ENCODE measurements at regions of chr10 and their contacts with region 1.

Region 1: GRCh38 chr10:100338434-100339036 is 8.5 kb upstream of the SCD start:
- DNase-seq: peak; percentile 85
- H3K4me3 ChIP-seq: no peak overlapping the region
- H3K27ac ChIP-seq: no peak overlapping the region
- H3K4me1 ChIP-seq: no peaks in the 10 kb centered on the region
- H3K27me3 ChIP-seq: peaks cover 0 to 6% (median 0%) of the 10 kb centered on the region in 3 donors
- CTCF ChIP-seq: peak; percentile 75 to 92 (median 88)
- EP300 ChIP-seq: no peak
- POLR2A ChIP-seq: no peak

Region 2: GRCh38 chr10:99870123-99870730 is 468.3 kb before region 1 on chr10:
- intact Hi-C with region 1: no loop called
- DNase-seq: no peak
- H3K4me3 ChIP-seq: no peak overlapping the region
- H3K27ac ChIP-seq: no peak overlapping the region
- H3K4me1 ChIP-seq: no peaks in the 10 kb centered on the region
- H3K27me3 ChIP-seq: peaks cover 0 to 10% (median 0%) of the 10 kb centered on the region in 3 donors
- CTCF ChIP-seq: no peak
- EP300 ChIP-seq: no peak
- POLR2A ChIP-seq: no peak

Region 3: DNA sequence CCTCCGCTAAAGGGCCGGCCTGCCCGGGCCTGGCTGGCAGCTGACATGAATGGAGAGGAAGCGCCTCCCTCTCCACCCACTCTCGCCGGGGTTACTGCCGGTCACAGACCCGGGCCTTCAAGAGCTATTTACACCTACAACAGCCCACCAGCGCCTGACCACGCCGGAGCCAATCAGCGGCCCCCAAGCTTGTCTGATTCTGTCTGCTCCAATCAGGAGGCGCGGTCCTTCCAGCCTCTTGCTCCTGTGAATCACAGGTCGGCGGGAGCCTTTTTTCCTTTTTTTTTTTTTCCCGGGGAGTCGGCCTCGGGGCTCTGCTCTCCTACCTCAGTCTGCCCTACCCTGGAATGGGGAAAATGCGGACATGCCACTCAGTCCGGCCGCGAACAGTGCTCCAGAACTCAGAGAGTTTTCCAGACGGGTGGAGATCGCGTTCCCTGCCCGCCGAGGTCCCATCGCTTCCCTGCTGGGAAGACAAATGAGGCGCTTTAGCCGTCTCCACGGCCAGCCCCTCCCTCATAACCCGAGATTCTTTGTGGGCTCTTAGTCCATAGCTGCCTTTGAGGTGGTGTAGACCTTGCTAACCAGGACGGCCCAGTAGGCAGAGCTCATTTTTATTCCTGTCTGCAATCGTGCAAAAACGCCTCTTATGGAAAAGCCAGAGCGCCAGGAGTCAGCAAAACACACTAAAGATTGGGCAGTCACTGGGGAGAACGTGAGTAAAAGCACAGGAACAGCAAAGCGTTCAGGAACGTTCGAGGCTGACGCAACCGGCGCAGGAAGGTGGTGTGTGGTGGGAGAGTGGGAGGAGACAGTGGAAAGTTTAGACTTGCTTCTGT is 35.0 kb after region 1 on chr10:
- intact Hi-C with region 1: loop called (anchors 5 kb)
- DNase-seq: peak; percentile 99
- H3K4me3 ChIP-seq: peak overlapping the region; percentile 41 to 80 (median 60)
- H3K27ac ChIP-seq: peak overlapping the region; percentile 90 to 99 (median 96)
- H3K4me1 ChIP-seq: peaks cover 0 to 31% (median 28%) of the 10 kb centered on the region in 4 donors
- H3K27me3 ChIP-seq: no peaks in the 10 kb centered on the region
- CTCF ChIP-seq: no peak
- EP300 ChIP-seq: peak in 1 of 4 donors; percentile 19
- POLR2A ChIP-seq: peak in 1 of 2 donors; percentile 36

Region 4: GRCh38 chr10:100433253-100434240 is 95.0 kb after region 1 on chr10:
- intact Hi-C with region 1: loop called (anchors 1 kb)
- DNase-seq: peak; percentile 93
- H3K4me3 ChIP-seq: no peak overlapping the region
- H3K27ac ChIP-seq: no peak overlapping the region
- H3K4me1 ChIP-seq: no peaks in the 10 kb centered on the region
- H3K27me3 ChIP-seq: no peaks in the 10 kb centered on the region
- CTCF ChIP-seq: peak; percentile 97 to 100 (median 100)
- EP300 ChIP-seq: no peak
- POLR2A ChIP-seq: no peak

Region 5: DNA sequence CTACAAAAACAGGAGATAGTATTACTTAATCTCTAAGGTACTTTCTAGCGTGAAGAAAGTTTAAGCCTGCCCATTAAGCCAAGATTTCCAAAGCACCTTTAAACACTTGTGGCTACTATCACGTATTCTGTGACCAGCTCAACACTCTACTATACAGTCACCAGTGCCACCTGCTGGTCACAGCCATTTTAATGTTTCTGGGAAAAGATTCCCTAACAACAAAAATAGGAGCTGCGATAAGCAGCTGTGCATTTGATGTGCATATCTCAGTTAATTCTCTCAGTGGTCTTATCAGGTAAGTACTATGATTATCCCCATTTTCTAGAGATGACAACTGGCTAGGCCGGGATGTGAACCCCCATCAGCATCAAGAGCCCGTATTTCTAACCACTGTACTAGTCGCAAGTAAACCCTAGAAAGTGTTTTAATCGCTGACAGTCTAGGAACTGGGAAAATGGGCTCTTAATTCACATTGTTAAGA is 180.3 kb after region 1 on chr10:
- intact Hi-C with region 1: loop called (anchors 2 kb)
- DNase-seq: no peak
- H3K4me3 ChIP-seq: peak overlapping the region; percentile 42 to 61 (median 56)
- H3K27ac ChIP-seq: peak overlapping the region in 1 of 4 donors; percentile 37
- H3K4me1 ChIP-seq: peaks cover 0 to 17% (median 14%) of the 10 kb centered on the region in 4 donors
- H3K27me3 ChIP-seq: peaks cover 0 to 4% (median 0%) of the 10 kb centered on the region in 3 donors
- CTCF ChIP-seq: peak; percentile 38 to 65 (median 62)
- EP300 ChIP-seq: no peak
- POLR2A ChIP-seq: no peak

Region 6: GRCh38 chr10:101485681-101486554 is 1147.4 kb after region 1 on chr10:
- intact Hi-C with region 1: no loop called
- DNase-seq: peak; percentile 73
- H3K4me3 ChIP-seq: peak overlapping the region in 1 of 4 donors; percentile 4
- H3K27ac ChIP-seq: no peak overlapping the region
- H3K4me1 ChIP-seq: peaks cover 0 to 3% (median 0%) of the 10 kb centered on the region in 4 donors
- H3K27me3 ChIP-seq: no peaks in the 10 kb centered on the region
- CTCF ChIP-seq: no peak
- EP300 ChIP-seq: no peak
- POLR2A ChIP-seq: no peak